ENCODE measurements at regions of chr1 and their contacts with region 1.

Region 1: DNA sequence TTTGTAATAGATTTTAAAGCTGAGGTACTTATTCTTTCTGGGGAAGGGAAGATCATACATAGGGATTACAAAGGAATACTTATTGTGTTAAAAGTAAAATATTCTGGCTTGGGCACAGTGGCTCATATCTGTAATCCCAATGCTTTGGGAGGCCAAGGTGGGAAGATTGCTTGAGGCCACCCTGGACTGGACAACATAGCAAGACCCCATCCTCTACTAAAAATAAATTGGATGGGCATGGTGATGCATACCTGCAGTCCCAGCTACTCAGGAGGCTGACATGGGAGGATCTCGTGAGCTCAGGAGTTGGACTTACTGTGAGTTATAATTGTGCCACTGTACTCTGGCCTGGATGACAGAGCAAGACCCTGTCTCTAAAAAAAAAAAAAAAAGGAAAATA is 27.6 kb downstream of the GABPB2 start:
- DNase-seq: no peak
- H3K4me3 ChIP-seq: no peak overlapping the region
- H3K27ac ChIP-seq: no peak overlapping the region
- H3K4me1 ChIP-seq: no peaks in the 10 kb centered on the region
- H3K27me3 ChIP-seq: no peaks in the 10 kb centered on the region
- CTCF ChIP-seq: no peak
- EP300 ChIP-seq: no peak
- POLR2A ChIP-seq: no peak

Region 2: DNA sequence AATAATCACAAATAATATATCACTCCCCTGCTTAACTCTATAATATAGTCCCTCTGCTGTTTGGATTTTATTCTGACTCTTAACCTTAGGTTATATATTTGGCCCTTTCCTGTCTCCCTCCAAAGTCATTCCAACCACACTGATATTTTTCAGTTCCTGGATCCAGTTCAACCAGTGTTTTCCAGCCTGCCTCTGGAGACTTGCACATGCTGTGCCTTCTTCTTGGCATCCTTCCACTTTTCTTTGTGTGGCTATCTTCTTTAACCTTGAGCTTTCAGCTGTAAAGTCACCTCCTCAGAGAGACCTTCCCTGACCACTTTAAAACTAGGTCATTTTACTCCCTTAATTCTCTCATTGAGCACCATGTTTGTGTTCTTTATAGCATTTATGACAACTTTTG is 142.8 kb before region 1 on chr1:
- intact Hi-C with region 1: no loop called
- DNase-seq: no peak
- H3K4me3 ChIP-seq: no peak overlapping the region
- H3K27ac ChIP-seq: no peak overlapping the region
- H3K4me1 ChIP-seq: no peaks in the 10 kb centered on the region
- H3K27me3 ChIP-seq: no peaks in the 10 kb centered on the region
- CTCF ChIP-seq: no peak
- EP300 ChIP-seq: no peak
- POLR2A ChIP-seq: no peak

Region 3: DNA sequence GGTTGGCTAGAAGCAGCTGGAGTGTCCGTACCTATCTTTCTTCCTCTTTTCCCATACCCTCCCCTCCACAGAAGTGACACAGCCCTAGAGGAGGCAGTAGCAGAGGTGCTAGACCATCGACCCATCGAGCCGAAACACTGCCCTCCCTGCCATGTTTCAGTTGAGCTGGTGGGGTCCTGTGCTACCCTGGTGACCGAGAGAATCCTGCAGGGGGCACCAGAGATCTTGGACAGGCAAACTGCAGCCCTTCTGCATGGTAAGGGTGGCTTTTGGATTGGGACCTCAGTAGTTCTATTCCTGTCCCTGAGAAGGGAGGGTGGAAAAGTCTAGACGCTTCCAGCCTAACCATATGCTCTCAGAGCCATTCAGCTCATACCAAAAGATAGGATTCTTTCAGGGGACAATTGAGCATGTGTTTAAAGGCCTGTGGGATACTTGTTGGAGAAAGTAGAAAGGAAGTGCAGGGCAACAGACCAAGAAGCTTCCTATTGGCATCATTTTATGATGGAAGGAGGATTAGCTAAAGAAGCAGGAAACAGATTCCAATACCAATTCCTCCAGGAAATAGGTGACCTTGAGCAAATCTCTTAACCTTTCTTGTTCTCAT is 73.5 kb before region 1 on chr1:
- intact Hi-C with region 1: no loop called
- DNase-seq: peak; percentile 93
- H3K4me3 ChIP-seq: no peak overlapping the region
- H3K27ac ChIP-seq: peak overlapping the region in 3 of 4 donors; percentile 3 to 35 (median 7)
- H3K4me1 ChIP-seq: peaks cover 10 to 11% (median 10%) of the 10 kb centered on the region in 4 donors
- H3K27me3 ChIP-seq: no peaks in the 10 kb centered on the region
- CTCF ChIP-seq: peak; percentile 73 to 79 (median 79)
- EP300 ChIP-seq: no peak
- POLR2A ChIP-seq: no peak

Region 4: GRCh38 chr1:151156515-151156819 is 58.3 kb after region 1 on chr1 and contains the start of gene TNFAIP8L2:
- intact Hi-C with region 1: loop called (anchors 2 kb)
- DNase-seq: no peak
- H3K4me3 ChIP-seq: peak within 1 kb of the TSS; percentile 27 to 46 (median 32)
- H3K27ac ChIP-seq: peak within 1 kb of the TSS in 2 of 4 donors; percentile 3 to 25
- H3K4me1 ChIP-seq: peaks cover 5 to 19% (median 17%) of the 10 kb centered on the region in 4 donors
- H3K27me3 ChIP-seq: no peaks in the 10 kb centered on the region
- CTCF ChIP-seq: no peak
- EP300 ChIP-seq: no peak
- POLR2A ChIP-seq: no peak
- total RNA-seq, gene TNFAIP8L2: 2.8 to 8.3 (median 5.0) TPM